Activated T-helper 1 cell treated with anti-CD3 and anti-CD28 coated beads, Interleukin-12 subunit alpha, Interleukin-12 subunit beta, Interleukin-2, Interleukin-4 antibody, amounts not matched to agents 30 ng/mL and 10 ng/mL and 1 ng/mL, durations not matched to agents 14 hours and 24 hours and 36 hours (primary cell): ENCODE measurements at regions of chr2 and their contacts with region 1.

Region 1: GRCh38 chr2:74587664-74588277 is 33.3 kb downstream of the DOK1 start:
- DNase-seq: peak; percentile 56
- H3K4me3 Mint-ChIP-seq: no peak overlapping the region
- H3K27ac Mint-ChIP-seq: peak overlapping the region; percentile 12
- H3K4me1 Mint-ChIP-seq: peaks cover 37% of the 10 kb centered on the region
- H3K27me3 Mint-ChIP-seq: peaks cover 17% of the 10 kb centered on the region

Region 2: GRCh38 chr2:74250189-74250631 is 337.6 kb before region 1 on chr2:
- intact Hi-C with region 1: loop called (anchors 1 kb)
- DNase-seq: peak; percentile 23
- H3K4me3 Mint-ChIP-seq: no peak overlapping the region
- H3K27ac Mint-ChIP-seq: no peak overlapping the region
- H3K4me1 Mint-ChIP-seq: no peaks in the 10 kb centered on the region
- H3K27me3 Mint-ChIP-seq: peaks cover 7% of the 10 kb centered on the region

Region 3: DNA sequence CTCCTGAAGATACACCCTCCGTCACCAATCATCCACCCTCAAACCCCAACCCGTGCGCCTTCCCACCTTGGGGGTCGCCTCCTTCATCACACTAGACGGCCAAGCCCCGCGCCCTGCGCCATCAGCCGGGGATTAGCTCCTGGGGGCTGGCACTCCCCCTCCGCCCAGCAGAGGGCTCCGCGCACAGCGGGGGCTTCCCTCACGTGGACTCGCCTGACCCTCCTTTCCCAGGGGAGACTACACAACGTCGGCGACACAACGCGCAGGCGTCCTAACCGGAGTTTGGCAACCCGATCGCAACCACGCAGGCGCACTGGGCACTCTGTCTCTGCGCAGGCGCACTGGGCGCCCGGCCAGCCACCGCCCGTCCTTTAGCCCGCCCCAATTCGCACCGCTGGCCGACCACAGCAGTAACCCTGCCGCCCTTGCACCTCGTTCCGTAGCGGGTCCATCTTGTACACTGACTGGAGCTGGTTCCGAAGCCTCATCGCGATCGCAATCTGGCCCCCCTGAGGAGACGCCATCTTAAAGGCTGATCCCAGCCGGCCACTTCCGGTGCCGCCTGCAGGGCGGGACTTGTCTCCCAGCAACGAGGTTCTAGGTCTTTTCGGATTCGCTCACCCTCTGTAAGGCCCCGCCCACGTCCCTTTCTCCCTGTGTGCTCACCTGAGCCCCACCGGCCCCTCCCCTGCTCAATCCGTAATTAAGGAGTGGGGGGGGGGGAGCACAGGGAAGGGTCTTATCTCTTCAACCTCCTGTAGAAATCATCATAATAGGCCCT is 80.4 kb before region 1 on chr2 and contains the start of gene PCGF1:
- intact Hi-C with region 1: loop called (anchors 1 kb)
- DNase-seq: peak; percentile 96
- H3K4me3 Mint-ChIP-seq: peak within 1 kb of the TSS; percentile 96
- H3K27ac Mint-ChIP-seq: peak within 1 kb of the TSS; percentile 99
- H3K4me1 Mint-ChIP-seq: peaks cover 55% of the 10 kb centered on the region
- H3K27me3 Mint-ChIP-seq: peaks cover 24% of the 10 kb centered on the region
- total RNA-seq, gene PCGF1: 41.9 and 45.0 TPM in 2 replicates

Region 4: GRCh38 chr2:74553892-74554645 is 33.7 kb before region 1 on chr2 and contains the start of gene LOXL3:
- intact Hi-C with region 1: loop called (anchors 1 kb)
- DNase-seq: peak; percentile 77
- H3K4me3 Mint-ChIP-seq: peak within 1 kb of the TSS; percentile 95
- H3K27ac Mint-ChIP-seq: peak within 1 kb of the TSS; percentile 96
- H3K4me1 Mint-ChIP-seq: peaks cover 33% of the 10 kb centered on the region
- H3K27me3 Mint-ChIP-seq: peaks cover 11% of the 10 kb centered on the region
- total RNA-seq, gene LOXL3: 1.9 and 2.0 TPM in 2 replicates

Region 5: DNA sequence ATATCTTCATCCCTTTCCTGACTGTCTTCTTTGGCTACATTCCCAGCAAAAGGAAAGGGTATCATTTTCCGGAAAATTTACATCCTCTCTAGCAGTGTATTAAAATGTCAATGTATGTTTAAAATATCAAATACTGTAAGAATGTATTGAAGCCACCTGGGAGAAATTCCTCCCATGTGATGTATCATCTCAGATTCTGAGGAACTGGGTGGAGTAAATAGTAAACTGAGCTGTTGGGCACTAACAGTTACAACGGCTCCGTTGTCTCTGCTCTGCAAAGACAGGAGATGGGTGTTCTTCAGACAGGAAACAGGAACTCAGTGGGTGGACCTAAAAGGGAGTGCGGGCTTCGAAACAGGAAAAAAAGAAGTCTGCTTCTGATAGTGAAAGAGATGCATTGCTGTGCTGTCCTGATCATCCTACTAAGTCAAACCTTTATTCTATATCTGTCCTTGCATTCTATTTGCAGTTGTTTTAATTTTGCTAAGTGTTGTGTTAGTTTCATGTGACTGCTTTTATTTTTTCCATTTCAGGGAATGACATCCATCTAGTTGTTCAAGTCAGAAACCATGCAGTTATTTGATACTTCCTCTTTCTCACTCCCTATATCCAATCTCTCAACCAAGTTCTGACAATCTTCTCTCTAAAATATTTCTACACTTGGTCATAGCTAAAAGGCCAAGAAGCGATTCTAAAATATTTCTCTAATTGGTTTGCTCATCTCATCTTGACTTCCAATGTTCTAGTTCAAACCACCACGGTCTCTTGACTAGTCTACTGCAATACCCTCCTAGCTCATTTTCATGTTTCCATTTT is 13.8 kb before region 1 on chr2:
- intact Hi-C with region 1: loop called (anchors 1 kb)
- DNase-seq: peak; percentile 31
- H3K4me3 Mint-ChIP-seq: peak overlapping the region; percentile 20
- H3K27ac Mint-ChIP-seq: peak overlapping the region; percentile 27
- H3K4me1 Mint-ChIP-seq: peaks cover 53% of the 10 kb centered on the region
- H3K27me3 Mint-ChIP-seq: no peaks in the 10 kb centered on the region